ENCODE measurements at regions of chr10 and their contacts with region 1.

Region 1: GRCh38 chr10:98269072-98269912 is 1.3 kb upstream of the LOXL4 start:
- DNase-seq: no peak
- ATAC-seq: peak; percentile 74
- H3K4me3 ChIP-seq: peak overlapping the region in 1 of 2 experiments; percentile 35; a peak in 2 of 4 replicates
- H3K27ac ChIP-seq: peak overlapping the region; percentile 80
- H3K4me1 ChIP-seq: peaks cover 44% of the 10 kb centered on the region
- H3K27me3 ChIP-seq: no peaks in the 10 kb centered on the region
- CTCF ChIP-seq: no peak

Region 2: GRCh38 chr10:98363230-98363629 is 93.9 kb after region 1 on chr10:
- CTCF ChIA-PET with region 1: no interaction called
- POLR2A ChIA-PET with region 1: interaction called, 15 read pairs
- in situ Hi-C with region 1: no loop called
- intact Hi-C with region 1: no loop called
- DNase-seq: no peak
- ATAC-seq: no peak
- H3K4me3 ChIP-seq: no peak overlapping the region
- H3K27ac ChIP-seq: no peak overlapping the region
- H3K4me1 ChIP-seq: no peaks in the 10 kb centered on the region
- H3K27me3 ChIP-seq: no peaks in the 10 kb centered on the region; the same call in 1 of the 2 replicates
- CTCF ChIP-seq: no peak